Activated naive CD8-positive, alpha-beta T cell treated with anti-CD3 and anti-CD28 coated beads, Interleukin-2, amount 10 ng/mL, durations not matched to agents 7 days and 5 days (primary cell): ENCODE measurements at regions of chr3 and their contacts with region 1.

Region 1: DNA sequence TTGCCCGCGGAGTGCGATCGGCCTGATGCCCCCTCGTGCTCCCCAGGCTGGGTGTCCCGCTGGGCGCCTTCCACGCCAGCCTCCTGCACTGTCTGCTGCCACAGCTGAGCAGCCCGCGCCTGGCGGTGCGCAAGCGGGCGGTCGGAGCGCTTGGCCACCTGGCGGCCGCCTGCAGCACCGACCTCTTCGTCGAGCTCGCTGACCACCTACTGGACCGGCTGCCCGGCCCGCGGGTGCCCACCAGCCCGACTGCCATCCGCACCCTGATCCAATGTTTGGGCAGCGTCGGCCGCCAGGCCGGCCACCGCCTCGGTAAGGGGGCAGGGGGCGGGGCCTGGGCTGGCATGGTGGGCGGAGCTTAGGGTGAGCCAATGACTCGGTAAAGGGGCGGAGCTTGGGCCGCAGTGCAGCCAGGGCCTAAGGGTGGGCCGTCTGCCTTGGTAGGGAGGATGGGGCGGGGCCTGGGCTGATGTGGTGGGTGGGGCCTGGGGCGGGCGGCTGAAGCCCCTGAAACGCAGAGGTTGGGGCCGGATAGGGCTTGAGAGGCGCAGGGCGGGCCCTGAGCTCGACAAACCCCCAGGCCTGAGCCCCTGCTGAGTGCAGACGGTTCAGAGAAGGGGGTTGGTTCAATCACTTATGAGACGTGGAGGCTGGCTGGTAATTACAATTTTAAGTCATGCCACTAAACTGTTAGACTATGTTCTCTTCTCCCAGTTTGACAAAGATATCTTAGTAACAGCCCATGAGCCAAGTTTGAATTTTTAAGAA is 13.7 kb downstream of the CAND2 start:
- DNase-seq: peak; percentile 96
- ATAC-seq: peak; percentile 98
- H3K4me3 Mint-ChIP-seq: peak overlapping the region; percentile 57
- H3K27ac Mint-ChIP-seq: peak overlapping the region; percentile 57
- H3K4me1 Mint-ChIP-seq: peaks cover 5% of the 10 kb centered on the region
- H3K27me3 Mint-ChIP-seq: peaks cover 6% of the 10 kb centered on the region

Region 2: DNA sequence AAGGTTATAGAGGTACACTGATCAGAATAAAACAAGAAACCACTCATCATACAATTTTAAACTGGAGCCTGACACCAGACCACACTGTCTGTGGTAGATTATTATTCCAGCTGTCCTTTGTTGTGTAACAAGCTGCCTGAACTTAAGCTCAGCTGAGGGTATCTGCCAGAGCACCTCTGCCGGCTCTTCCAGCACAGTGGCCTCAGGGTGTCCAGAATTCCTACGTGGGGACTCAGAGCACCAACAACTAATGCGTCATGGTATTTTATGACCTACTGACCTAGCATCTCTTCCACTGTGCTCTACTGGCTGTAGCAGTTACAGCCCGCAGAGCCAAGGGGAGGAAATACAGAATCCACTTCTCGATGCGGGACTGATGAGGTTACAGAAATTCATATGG is 130.7 kb before region 1 on chr3:
- POLR2A ChIA-PET with region 1: no interaction called
- DNase-seq: no peak
- ATAC-seq: no peak
- H3K4me3 Mint-ChIP-seq: no peak overlapping the region
- H3K27ac Mint-ChIP-seq: no peak overlapping the region
- H3K4me1 Mint-ChIP-seq: peaks cover 7% of the 10 kb centered on the region
- H3K27me3 Mint-ChIP-seq: peaks cover 9% of the 10 kb centered on the region

Region 3: GRCh38 chr3:12741209-12741608 is 69.0 kb before region 1 on chr3:
- POLR2A ChIA-PET with region 1: no interaction called
- DNase-seq: no peak
- ATAC-seq: no peak
- H3K4me3 Mint-ChIP-seq: no peak overlapping the region
- H3K27ac Mint-ChIP-seq: no peak overlapping the region
- H3K4me1 Mint-ChIP-seq: no peaks in the 10 kb centered on the region
- H3K27me3 Mint-ChIP-seq: peaks cover 7% of the 10 kb centered on the region

Region 4: GRCh38 chr3:12841149-12841970 is 31.2 kb after region 1 on chr3 and contains the start of gene RPL32:
- POLR2A ChIA-PET with region 1: interaction called, 19 read pairs
- DNase-seq: peak; percentile 84
- ATAC-seq: peak; percentile 87
- H3K4me3 Mint-ChIP-seq: peak within 1 kb of the TSS; percentile 94
- H3K27ac Mint-ChIP-seq: peak within 1 kb of the TSS; percentile 97
- H3K4me1 Mint-ChIP-seq: peaks cover 39% of the 10 kb centered on the region
- H3K27me3 Mint-ChIP-seq: peaks cover 1% of the 10 kb centered on the region
- total RNA-seq, gene RPL32: 2,162 to 2,195 TPM